Left colon (tissue), 2 donors: ENCODE measurements at regions of chr1 and their contacts with region 1.

Region 1: DNA sequence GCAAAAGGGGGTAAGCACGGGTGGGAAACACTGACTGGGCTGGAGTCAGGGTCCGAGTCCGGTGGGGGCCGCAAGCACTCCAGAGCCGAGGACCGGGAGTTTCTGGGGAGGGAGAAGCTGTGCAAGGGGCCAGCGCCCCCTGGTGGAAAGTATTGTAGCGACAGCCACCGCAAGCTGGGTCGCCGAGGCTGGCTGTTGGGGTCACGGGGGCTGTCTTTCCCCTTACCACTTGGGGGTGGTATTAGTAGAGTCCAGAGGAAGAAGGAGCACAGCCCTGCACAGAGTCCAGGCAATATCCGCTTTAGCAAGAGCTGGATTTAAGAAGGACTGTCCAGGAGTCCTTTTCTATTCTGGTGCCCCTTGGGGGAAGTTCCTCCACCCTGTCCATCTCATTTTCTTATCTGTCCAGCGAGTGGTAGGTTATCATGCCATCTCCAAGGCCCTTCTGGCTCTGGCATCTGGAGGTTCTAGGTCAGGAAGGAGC is 17.9 kb upstream of the ETV3 start:
- DNase-seq: peak in 1 of 2 donors; percentile 83
- ATAC-seq: peak; percentile 49

Region 2: GRCh38 chr1:156961709-156962108 is 194.4 kb before region 1 on chr1:
- intact Hi-C with region 1: no loop called
- DNase-seq: no peak
- ATAC-seq: no peak

Region 3: DNA sequence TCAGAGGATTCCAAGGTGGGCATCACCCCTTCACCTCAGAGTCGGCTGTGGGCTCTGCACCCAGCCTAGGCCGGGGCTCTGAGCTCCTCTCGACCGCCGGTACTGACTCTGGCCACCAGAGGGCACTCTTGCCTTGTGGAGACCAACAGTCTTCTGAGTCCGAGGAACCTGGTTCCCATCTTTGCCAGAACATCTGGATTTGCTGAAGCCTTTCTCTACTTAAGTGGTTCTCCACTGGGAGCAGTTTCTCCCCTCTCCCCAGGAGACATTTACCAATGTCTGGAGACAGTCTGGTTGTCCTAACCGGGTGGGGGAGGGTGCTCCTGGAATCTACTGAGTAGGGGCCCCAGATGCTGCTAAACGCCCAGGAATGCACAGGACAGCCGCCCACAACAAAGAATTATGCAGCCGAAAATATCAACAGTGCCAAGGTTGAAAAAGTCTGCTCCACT is 65.9 kb before region 1 on chr1:
- intact Hi-C with region 1: loop called (anchors 2 to 5 kb)
- DNase-seq: peak; percentile 72 to 92
- ATAC-seq: peak; percentile 93

Region 4: GRCh38 chr1:157217486-157217885 is 61.4 kb after region 1 on chr1:
- intact Hi-C with region 1: no loop called
- DNase-seq: no peak
- ATAC-seq: no peak